T-cell (primary cell): ENCODE measurements at regions of chr6 and their contacts with region 1.

Region 1: GRCh38 chr6:31815025-31815838 is at the starts of genes HSPA1A and HSPA1L:
- DNase-seq: peak in 7 of 35 experiments; percentile 22 to 65 (median 35)
- ATAC-seq: peak; percentile 7 to 19 (median 12)
- H3K4me3 ChIP-seq: peak within 1 kb of the TSS; percentile 88 to 90
- H3K4me3 Mint-ChIP-seq: peak within 1 kb of the TSS; percentile 89 to 92 (median 90)
- H3K27ac ChIP-seq: peak within 1 kb of the TSS; percentile 69
- H3K27ac Mint-ChIP-seq: peak within 1 kb of the TSS; percentile 90 to 94
- H3K4me1 ChIP-seq: peaks cover 9 to 48% of the 10 kb centered on the region in 2 experiments
- H3K4me1 Mint-ChIP-seq: peaks cover 30 to 54% (median 44%) of the 10 kb centered on the region in 3 donors
- H3K27me3 ChIP-seq: no peaks in the 10 kb centered on the region
- H3K27me3 Mint-ChIP-seq: no peaks in the 10 kb centered on the region
- total RNA-seq, gene HSPA1A: 8.8 to 117 (median 77.9) TPM
- total RNA-seq, gene HSPA1L: 2.8 to 8.5 (median 8.1) TPM

Region 2: DNA sequence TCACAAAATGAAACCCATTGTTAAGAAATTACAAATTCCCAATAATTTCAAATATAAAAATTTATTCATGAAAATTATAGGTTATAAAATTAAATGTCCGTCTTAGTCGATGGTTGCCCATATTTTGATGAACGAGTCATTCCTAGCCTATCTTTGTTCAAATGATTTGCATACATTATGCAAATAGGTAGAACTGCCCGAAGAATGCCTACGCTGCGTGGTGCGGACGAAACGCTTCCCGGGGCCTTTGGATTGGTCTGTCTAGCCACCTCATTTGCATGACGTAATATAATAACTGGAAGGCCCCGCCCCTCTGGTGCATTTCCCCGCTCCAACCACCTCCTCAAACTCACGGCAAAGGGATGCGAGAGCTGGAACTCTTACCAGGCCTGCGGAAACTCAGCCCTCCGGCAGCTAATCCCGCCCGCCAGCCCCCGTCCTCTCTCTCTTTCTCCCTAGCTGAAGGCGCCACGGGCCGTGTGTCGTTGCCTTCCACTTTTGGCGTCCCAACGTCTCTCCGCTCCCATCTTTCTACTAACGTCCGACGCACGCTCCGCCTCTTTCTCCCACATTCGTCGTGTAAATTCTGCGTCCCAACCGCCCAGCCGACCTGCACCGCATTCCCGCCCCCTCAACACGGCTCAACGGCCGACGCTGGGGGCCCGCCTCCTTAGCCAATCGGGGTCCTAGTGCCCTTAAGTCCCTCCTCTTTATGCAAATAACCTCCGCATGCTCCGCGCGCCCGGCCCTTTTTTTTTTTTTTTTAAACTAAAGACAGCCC is 195.2 kb before region 1 on chr6:
- CTCF ChIA-PET with region 1: interaction called in 1 of 2 experiments, 4 read pairs
- POLR2A ChIA-PET with region 1: interaction called in 1 of 2 experiments, 16 read pairs
- DNase-seq: peak; percentile 89 to 98 (median 95)
- ATAC-seq: peak; percentile 84 to 89 (median 88)
- H3K4me3 ChIP-seq: peak overlapping the region; percentile 61 to 65
- H3K4me3 Mint-ChIP-seq: peak overlapping the region; percentile 75 to 87 (median 83)
- H3K27ac ChIP-seq: peak overlapping the region; percentile 98
- H3K27ac Mint-ChIP-seq: peak overlapping the region; percentile 92 to 95
- H3K4me1 ChIP-seq: peaks cover 31 to 43% of the 10 kb centered on the region in 2 experiments
- H3K4me1 Mint-ChIP-seq: peaks cover 38 to 53% (median 46%) of the 10 kb centered on the region in 3 donors
- H3K27me3 ChIP-seq: no peaks in the 10 kb centered on the region
- H3K27me3 Mint-ChIP-seq: no peaks in the 10 kb centered on the region

Region 3: DNA sequence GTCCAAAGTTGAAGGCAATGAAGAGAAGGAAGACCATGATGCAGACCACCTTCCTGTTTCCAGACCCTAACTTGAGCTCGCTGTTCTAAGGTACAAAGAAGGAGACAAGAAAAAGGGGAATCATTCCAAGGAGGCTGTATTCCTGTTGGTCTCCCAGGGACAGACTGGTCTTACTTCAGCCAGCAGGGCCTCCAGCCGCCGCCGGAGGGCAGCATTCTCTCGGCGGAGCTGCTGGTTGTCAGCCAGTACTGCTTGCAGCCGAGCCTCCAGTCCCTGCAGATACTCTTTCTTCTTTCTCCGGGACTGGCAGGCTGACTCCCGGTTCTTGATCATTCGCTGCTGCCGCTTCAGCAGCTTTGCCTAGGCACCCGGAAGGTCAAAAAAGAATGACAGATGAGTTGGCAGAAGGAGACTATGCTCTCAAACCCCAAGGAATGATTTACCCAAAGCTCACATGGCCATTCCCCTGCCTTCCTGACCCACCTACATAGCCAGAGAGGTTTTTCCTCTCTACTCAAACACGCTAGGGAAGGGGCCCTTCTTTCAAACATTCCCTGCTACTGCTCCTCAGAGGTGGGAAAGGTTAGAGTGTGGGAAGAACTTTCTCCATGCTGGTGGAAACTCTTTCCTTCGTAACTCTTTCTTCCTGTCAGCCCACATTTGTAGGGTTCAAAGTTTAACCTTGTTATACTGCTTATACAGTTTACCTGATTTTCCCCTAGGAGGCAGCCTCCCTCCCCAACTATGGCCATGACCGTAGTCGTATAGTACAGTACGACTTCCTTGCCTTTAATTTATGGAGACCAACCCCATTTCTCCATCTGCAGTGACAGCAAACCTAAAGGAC is 303.8 kb after region 1 on chr6:
- CTCF ChIA-PET with region 1: no interaction called
- POLR2A ChIA-PET with region 1: interaction called in 1 of 2 experiments, 16 read pairs
- DNase-seq: peak in 34 of 35 experiments; percentile 16 to 76 (median 55)
- ATAC-seq: peak; percentile 71 to 92 (median 84)
- H3K4me3 ChIP-seq: no peak overlapping the region
- H3K4me3 Mint-ChIP-seq: no peak overlapping the region
- H3K27ac ChIP-seq: no peak overlapping the region
- H3K27ac Mint-ChIP-seq: peak overlapping the region in 1 of 2 donors; percentile 79
- H3K4me1 ChIP-seq: peaks cover 0 to 12% of the 10 kb centered on the region in 2 experiments
- H3K4me1 Mint-ChIP-seq: peaks cover 11 to 22% (median 19%) of the 10 kb centered on the region in 3 donors
- H3K27me3 ChIP-seq: no peaks in the 10 kb centered on the region
- H3K27me3 Mint-ChIP-seq: no peaks in the 10 kb centered on the region